H1 (cell line): ENCODE measurements at regions of chr11 and their contacts with region 1.

Region 1: DNA sequence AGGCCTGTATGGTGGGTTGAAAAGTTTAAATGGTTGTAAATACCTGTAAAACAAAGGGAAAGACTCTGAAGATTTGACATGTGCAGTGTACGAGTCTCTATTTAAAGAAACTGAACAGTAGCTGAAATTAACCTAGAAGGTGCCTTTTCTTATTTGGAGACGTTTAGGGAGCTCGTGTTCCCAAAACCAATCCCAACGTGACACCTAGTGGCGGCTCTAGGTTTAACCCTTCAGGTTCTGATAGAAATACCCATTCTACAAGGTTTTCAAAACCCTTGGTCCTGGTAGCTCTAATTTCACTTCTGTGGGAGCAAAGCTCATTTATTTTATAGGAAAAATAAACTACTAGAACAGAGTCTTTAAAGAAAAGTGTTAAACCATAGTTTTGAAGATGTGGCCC is 258.3 kb downstream of the LRRC4C start:
- DNase-seq: peak; percentile 29 to 78
- H3K4me3 ChIP-seq: no peak overlapping the region
- H3K27ac ChIP-seq: no peak overlapping the region
- H3K4me1 ChIP-seq: no peaks in the 10 kb centered on the region
- H3K27me3 ChIP-seq: no peaks in the 10 kb centered on the region
- CTCF ChIP-seq: peak in 2 of 3 experiments; percentile 55 to 72; a peak in 3 of 4 replicates
- EP300 ChIP-seq: no peak
- POLR2A ChIP-seq: no peak
- RAD21 ChIP-seq: peak; percentile 93 to 96

Region 2: DNA sequence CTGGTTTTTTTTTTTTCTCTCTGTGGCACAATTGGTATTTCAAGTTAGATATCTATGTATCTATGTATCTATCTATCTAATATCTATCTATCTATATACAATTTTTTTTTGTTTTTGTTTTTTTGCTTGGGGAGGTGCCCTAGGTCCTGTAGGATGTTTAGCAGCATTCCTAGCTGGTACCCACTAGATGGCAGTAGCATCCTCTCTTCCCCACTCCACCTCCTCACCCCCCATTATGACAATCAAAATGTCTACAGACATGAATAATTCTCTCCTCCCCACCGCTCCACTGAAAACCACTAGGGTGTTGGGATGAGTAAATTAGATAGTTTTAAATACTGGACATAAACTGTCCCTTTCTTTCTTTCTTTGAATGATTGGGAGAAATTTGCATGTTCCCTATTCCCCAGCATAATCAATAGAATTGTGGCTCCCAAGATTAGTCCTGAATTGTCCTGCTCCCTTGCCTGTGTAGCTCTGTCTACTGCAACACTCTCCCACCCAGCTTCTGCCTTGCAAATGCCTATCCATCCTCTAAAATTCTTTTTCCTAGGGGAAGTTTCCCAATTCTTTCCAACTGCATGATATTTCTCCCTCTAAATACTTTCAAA is 894.1 kb before region 1 on chr11:
- CTCF ChIA-PET with region 1: interaction called, 14 read pairs
- POLR2A ChIA-PET with region 1: no interaction called
- DNase-seq: no peak
- H3K4me3 ChIP-seq: no peak overlapping the region
- H3K27ac ChIP-seq: no peak overlapping the region
- H3K4me1 ChIP-seq: peaks cover 0 to 2% (median 0%) of the 10 kb centered on the region in 4 experiments; a peak in 1 of 7 replicates
- H3K27me3 ChIP-seq: no peaks in the 10 kb centered on the region
- CTCF ChIP-seq: peak; percentile 47 to 64 (median 59)
- EP300 ChIP-seq: no peak
- POLR2A ChIP-seq: no peak
- RAD21 ChIP-seq: peak; percentile 89 to 92